SK-N-SH (cell line): ENCODE measurements at regions of chr11 and their contacts with region 1.

Region 1: DNA sequence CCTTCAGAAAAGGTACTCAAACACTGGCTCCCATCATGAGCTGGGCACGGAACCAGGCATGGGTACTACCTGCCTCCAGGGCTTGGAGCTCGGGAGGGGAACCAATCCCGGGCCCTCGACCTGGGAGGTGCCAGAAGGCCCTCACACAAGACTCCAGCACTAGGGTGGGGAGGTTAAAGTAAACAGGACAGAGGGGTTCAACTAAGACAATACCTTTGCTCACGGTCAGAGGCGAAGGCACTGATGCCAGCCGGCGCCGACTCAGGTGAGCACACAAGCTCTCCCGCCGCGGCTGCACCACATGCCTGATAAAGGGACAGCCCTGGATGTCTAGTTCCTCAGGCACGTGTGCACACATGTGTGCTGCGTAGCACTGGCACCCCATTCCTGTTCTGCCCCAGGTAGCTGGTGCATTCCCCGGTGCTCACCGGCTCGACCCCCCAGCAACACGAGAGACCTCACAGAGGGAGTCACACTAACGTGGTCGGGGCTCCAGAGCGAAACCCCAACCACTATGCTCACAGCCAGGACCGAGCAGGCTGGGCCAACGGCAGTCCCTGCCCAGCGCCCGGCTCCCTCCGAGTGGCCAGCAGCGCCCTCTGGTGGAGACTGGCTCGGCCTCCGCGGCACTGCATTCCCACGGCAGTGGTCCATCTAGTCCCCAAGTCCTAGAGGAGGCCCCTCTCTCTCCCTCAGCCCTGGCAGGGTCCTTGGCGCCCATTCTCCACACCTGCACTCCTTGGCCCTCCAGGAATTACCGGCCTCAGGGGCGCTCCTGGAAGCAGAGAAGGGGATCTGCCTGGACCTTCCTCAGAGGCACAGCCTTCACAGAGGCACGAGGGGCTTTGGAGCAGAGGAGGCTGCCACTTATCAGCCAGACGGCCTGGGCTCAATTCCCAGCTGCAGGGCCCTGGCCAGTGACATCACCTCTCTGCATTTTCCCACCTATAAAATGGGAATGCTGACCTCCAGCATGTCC is 28.8 kb upstream of the MOB2 start:
- DNase-seq: peak; percentile 96
- H3K4me3 ChIP-seq: peak overlapping the region in 1 of 2 experiments; percentile 50; a peak in 1 of 4 replicates
- H3K27ac ChIP-seq: no peak overlapping the region; a peak in 1 of 4 replicates
- H3K4me1 ChIP-seq: peaks cover 0 to 29% of the 10 kb centered on the region in 2 experiments; a peak in 1 of 4 replicates
- H3K27me3 ChIP-seq: no peaks in the 10 kb centered on the region
- CTCF ChIP-seq: peak; percentile 86
- EP300 ChIP-seq: no peak
- RAD21 ChIP-seq: peak; percentile 91

Region 2: GRCh38 chr11:1181867-1182535 is 333.4 kb before region 1 on chr11:
- CTCF ChIA-PET with region 1: no interaction called
- POLR2A ChIA-PET with region 1: no interaction called
- DNase-seq: no peak
- H3K4me3 ChIP-seq: no peak overlapping the region
- H3K27ac ChIP-seq: no peak overlapping the region
- H3K4me1 ChIP-seq: no peaks in the 10 kb centered on the region
- H3K27me3 ChIP-seq: no peaks in the 10 kb centered on the region
- CTCF ChIP-seq: no peak
- EP300 ChIP-seq: no peak
- RAD21 ChIP-seq: no peak

Region 3: GRCh38 chr11:1293631-1294030 is 221.7 kb before region 1 on chr11:
- CTCF ChIA-PET with region 1: interaction called, 24 read pairs
- POLR2A ChIA-PET with region 1: no interaction called
- DNase-seq: peak; percentile 73
- H3K4me3 ChIP-seq: no peak overlapping the region
- H3K27ac ChIP-seq: no peak overlapping the region
- H3K4me1 ChIP-seq: no peaks in the 10 kb centered on the region
- H3K27me3 ChIP-seq: no peaks in the 10 kb centered on the region
- CTCF ChIP-seq: peak; percentile 11; the same call in 1 of the 2 replicates
- EP300 ChIP-seq: no peak
- RAD21 ChIP-seq: peak; percentile 71

Region 4: GRCh38 chr11:1458340-1459218 is 56.8 kb before region 1 on chr11:
- CTCF ChIA-PET with region 1: interaction called, 23 read pairs
- POLR2A ChIA-PET with region 1: no interaction called
- DNase-seq: peak; percentile 90
- H3K4me3 ChIP-seq: no peak overlapping the region
- H3K27ac ChIP-seq: peak overlapping the region in 1 of 2 experiments; percentile 4; a peak in 1 of 4 replicates
- H3K4me1 ChIP-seq: peaks cover 0 to 10% of the 10 kb centered on the region in 2 experiments; a peak in 1 of 4 replicates
- H3K27me3 ChIP-seq: no peaks in the 10 kb centered on the region
- CTCF ChIP-seq: peak; percentile 38
- EP300 ChIP-seq: no peak
- RAD21 ChIP-seq: peak; percentile 27; the same call in 1 of the 2 replicates

Region 5: DNA sequence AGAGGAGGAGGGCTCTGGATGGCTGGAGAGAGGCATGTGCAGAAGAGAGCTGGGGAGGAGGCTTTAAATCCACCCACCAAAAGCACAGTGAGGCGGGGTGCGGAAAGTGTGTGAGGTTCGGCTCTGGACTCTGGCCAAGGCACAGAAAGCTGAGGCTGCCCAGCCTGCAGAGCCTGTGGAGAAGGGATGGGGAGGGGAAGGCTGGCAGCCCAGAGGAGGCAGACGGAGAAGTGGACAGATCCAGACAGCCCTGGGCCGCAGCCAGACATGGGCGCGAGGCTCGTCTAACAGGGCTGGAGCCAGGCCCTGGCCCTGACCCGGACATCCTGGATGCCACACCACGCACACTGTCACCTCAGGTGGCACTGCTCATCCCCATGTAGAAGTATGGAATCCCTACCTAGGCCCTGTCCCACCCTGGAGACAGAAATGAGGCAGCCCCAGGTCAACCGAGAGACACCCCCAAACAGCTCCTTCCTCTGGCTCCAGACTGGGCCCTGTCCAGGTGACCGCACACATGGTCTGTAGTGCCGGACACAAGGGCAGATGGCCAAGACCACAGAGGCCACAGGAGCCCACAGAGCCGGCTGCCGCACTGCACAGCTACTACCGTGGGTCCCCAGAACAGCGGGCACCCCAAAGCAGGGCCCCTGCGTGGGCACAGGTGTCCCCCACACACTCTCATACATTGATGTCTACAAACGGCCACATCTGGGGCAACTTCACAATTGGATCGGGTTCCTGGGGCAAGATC is 12.2 kb before region 1 on chr11:
- CTCF ChIA-PET with region 1: interaction called, 40 read pairs
- POLR2A ChIA-PET with region 1: interaction called, 4 read pairs
- DNase-seq: peak; percentile 84
- H3K4me3 ChIP-seq: no peak overlapping the region
- H3K27ac ChIP-seq: peak overlapping the region in 1 of 2 experiments; percentile 92; a peak in 2 of 4 replicates
- H3K4me1 ChIP-seq: peaks cover 0 to 57% of the 10 kb centered on the region in 2 experiments; a peak in 1 of 4 replicates
- H3K27me3 ChIP-seq: no peaks in the 10 kb centered on the region
- CTCF ChIP-seq: no peak
- EP300 ChIP-seq: no peak
- RAD21 ChIP-seq: no peak

Region 6: DNA sequence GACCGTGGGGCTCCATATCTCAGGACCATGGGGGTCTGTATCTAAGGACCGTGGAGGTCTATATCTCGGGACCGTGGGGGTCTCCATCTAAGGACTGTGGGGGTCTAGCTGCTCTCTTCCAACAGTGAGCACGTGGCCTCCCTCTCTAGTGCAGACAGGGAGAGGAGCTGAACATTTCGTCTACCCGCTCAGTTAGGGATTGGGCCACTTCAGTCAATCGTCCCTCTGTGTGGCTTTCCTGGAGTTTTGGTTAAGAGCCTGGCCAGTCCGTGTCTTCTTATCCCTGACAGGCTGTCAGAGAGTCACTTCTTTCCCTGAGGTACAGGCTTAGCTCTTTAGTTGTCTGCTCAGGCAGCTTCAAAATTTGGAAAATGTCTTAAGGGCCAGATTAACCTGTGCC is 66.6 kb after region 1 on chr11:
- CTCF ChIA-PET with region 1: no interaction called
- POLR2A ChIA-PET with region 1: no interaction called
- DNase-seq: no peak
- H3K4me3 ChIP-seq: no peak overlapping the region
- H3K27ac ChIP-seq: no peak overlapping the region
- H3K4me1 ChIP-seq: no peaks in the 10 kb centered on the region
- H3K27me3 ChIP-seq: no peaks in the 10 kb centered on the region
- CTCF ChIP-seq: no peak
- EP300 ChIP-seq: no peak
- RAD21 ChIP-seq: no peak